ENCODE measurements at regions of chr20 and their contacts with region 1.

Region 1: GRCh38 chr20:47839200-47839599 is 53.9 kb upstream of the SULF2 start:
- DNase-seq: no peak
- H3K4me3 ChIP-seq: no peak overlapping the region
- H3K27ac ChIP-seq: no peak overlapping the region
- H3K4me1 ChIP-seq: peaks cover 12% of the 10 kb centered on the region
- H3K27me3 ChIP-seq: no peaks in the 10 kb centered on the region
- CTCF ChIP-seq: no peak

Region 2: DNA sequence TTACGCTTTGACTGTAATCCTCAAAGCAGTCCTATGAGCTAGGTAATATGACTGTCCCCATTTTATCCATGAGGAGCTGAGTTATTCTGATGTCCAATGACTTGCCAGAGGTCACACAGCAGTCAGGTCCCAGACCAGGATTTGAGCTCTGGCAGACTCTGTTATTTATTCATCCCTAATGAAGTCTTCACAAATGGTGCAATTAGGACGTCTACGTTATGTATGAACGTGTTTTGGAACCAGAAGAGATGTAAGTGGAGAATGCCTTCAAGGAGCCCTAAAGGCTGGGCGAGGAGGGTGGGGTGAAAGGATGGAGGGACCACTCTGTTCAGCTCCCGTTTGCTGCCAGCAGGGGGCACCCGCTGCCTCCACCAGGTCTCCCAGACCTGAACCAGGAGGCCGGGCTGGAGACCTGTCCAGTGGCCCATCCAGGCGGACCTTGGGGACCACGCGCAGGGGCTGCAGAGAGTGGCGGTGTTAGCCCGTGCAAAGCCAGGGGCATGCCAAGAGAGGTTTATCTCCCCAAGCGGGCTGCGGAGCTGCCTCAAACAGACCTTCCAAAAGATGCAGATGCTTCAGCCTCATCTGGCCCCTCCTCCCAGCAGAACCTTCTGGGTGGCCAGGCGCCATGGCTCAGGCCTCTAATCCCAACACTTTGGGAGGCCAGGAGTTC is 1852.0 kb before region 1 on chr20:
- CTCF ChIA-PET with region 1: interaction called, 10 read pairs
- dilution Hi-C with region 1: no loop called
- in situ Hi-C with region 1: no loop called
- intact Hi-C with region 1: no loop called
- DNase-seq: peak; percentile 37
- H3K4me3 ChIP-seq: no peak overlapping the region
- H3K27ac ChIP-seq: no peak overlapping the region
- H3K4me1 ChIP-seq: no peaks in the 10 kb centered on the region
- H3K27me3 ChIP-seq: no peaks in the 10 kb centered on the region
- CTCF ChIP-seq: peak; percentile 83 to 99

Measured in mammary epithelial cell (primary cell).